Posterior cingulate gyrus (tissue), 11 donors: ENCODE measurements at regions of chr11 and their contacts with region 1.

Region 1: GRCh38 chr11:113896156-113896879 is 8.3 kb upstream of the HTR3B start:
- DNase-seq: peak in 6 of 10 donors; percentile 25 to 90 (median 36)

Region 2: DNA sequence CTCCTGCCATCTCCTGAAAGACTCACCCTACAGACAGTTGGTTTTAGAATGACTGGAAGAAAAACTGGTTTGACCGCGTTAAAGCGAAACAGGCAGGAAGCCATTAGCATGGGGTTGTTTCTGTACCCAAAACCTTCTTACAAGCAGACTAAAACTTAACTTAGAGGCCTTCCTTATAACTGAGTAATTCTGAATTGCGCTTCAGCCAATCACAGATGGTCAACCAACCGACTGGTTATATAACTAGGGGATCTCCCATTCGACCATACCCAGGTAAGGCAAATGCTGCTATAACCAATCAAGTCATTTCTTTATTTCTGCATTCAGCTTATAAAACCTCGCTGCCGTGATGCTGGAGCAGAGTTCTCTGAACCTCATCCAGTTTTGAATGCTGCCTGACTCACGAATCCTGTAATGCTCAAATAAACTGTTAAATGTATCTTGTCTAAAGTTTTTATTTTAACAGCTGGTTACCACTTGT is 333.3 kb before region 1 on chr11:
- intact Hi-C with region 1: no loop called
- DNase-seq: no peak

Region 3: DNA sequence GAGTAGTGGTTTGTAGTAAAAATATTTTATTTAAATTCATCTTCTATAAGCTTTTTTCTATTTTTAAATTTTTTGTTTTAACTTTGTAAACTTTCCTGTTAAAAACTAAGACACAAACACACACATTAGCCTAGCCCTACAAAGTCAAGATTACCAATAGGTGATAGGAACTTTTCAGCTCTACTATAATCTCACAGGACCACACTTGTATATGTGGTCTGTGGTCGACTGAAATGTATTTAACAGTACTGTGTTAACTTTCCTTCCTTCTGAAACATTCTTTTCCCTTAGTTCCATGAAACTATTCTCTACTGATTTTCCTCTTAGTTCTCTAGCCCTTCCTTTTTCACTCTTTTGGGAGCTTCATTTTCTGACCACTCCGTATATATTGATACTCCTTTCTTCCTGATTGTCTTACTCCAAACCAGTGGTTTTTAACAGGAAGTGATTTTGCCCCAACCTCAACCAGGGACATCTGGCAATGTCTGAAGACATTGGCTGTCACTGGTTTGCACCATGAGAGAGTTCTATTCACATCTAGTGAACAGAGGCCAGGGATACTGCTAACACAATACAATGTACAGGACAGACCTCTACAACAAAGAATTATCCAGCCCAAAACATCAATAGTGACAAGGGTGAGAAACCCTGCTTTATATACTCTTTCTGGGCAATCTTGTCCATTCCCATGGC is 131.6 kb before region 1 on chr11:
- intact Hi-C with region 1: no loop called
- DNase-seq: no peak

Region 4: GRCh38 chr11:113956986-113957385 is 60.7 kb after region 1 on chr11:
- intact Hi-C with region 1: loop called (anchors 5 kb)
- DNase-seq: no peak

Region 5: DNA sequence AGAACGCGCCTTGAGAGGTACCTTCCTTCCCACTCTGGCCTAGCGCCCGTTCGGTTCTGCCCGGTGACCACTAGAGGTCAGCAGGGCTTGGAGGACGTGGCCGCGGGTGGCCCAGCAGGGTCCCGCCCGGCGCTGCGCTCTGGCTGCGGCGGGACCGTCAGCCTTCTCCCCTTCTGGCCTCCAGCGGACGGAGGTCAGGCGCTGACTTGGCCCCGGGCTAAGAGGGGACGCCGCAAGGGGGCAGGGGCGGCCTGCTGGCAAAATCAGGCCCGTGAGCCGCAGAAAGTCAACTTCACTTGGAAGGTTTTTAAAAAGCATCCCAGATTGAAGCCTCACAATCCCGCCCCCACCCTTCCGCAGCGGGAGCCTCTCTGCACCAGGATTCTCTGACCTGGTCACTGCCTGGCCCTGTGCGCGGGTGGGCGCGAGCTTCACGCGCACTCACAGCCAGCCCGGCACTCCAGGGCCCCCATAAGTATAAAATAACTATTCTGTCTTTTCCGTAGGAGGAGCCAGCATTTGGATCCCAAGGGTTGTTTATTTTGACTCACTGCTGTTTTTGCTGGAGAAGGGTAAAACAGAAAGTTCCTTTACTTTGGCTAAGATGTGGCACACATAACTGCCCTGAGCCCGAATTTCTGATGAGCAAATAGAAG is 140.0 kb after region 1 on chr11:
- intact Hi-C with region 1: loop called (anchors 5 kb)
- DNase-seq: peak; percentile 55 to 96 (median 75)

Region 6: DNA sequence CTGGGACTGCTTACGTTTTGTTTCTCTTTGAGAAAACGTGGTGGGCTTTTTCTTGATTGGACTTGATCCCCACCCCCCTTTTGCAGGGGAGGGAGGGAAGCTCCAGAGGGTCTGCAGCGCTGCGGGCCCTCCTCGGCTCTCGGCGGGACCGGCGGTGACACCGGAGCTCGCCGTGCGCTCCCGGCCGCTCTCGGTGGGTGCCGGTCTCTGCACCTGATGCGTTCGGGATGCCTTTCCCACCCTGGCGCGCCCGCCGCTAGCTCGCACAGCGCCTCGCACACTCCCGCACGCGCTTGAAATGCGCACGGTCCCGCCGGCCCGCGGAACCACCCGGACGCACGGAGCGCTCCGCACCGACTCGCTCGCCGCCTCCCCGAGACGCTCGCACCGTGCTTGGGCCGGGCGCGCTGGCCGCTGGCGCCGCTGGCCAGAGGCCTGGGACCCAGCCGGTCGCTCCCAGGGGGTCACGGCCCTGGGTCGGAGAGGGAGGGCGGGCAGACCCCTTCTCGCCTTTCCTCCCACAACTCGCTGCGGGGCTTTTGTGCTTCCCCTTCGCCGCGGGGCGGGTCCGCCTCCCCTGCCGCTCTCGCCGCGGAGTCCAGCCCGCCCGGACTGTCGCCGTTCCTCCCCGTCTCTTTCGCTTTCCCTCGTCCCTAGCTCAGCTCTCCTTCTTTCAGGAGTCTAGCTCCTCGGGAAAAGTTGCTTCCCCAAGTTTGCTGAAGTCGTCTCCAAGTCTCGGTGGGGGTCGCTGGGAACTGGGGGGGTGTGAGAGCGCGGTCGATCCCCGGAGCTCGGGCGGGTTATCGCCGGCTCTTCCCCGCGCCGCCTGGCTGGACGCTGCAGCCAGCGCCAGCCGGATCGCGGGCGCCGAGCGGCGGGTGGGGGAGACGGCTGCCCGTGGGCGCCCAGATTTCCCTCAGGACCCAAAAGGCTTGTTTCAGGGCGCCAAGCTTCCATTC is 164.4 kb after region 1 on chr11:
- intact Hi-C with region 1: no loop called
- DNase-seq: peak in 5 of 10 donors; percentile 39 to 91 (median 51)